Endothelial cell of umbilical vein (primary cell): ENCODE measurements at regions of chr12 and their contacts with region 1.

Region 1: GRCh38 chr12:52980693-52981423 is 25.4 kb upstream of the EIF4B start:
- DNase-seq: peak; percentile 91
- H3K4me3 ChIP-seq: no peak overlapping the region
- H3K27ac ChIP-seq: no peak overlapping the region
- H3K4me1 ChIP-seq: no peaks in the 10 kb centered on the region
- H3K27me3 ChIP-seq: peaks cover 3 to 4% of the 10 kb centered on the region in 2 experiments
- CTCF ChIP-seq: peak; percentile 92 to 100
- POLR2A ChIP-seq: no peak

Region 2: DNA sequence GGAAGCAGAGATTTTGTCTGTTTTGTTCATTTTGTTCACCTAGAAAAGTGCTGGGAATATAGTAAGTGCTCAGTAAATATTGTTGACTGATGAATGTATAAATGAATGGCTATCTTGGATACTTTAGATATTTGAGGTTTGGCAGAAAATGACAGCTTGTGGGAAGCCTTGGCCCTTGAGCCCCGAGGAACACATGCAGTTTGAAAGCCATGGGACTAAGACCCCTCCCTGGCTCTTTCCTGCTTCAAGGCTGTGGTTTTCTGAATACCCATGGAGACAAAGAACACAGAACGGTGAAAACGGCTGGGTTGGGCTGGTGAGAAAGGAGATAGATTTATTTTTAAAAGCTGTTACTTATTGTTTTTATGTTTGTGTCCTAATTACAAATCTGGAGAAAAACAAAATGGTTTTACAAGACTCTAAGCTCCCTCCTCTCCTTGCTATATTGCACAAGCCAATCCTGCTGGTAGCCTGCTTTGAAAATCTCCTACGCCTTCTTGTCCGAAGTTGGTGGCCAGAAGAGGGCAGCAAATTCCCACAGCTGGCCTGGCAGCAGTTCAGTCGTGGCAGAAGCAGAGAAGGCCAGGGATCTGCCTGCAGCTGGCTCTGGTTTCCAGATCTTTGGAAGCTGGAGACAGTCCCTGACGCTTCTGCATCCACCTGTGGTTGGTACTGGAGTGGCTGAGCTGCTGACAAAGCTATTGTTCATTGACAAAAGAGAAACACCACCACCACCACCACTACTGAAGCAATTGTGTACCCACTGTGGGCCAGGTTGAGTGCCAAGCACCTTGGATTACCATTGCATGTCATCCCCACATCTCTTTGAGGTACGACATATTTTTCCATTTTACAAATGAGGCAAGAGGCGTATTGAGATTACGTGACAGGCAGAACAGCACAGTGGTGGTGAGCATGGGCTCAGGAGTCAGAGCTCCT is 608.4 kb before region 1 on chr12:
- CTCF ChIA-PET with region 1: interaction called, 14 read pairs
- POLR2A ChIA-PET with region 1: no interaction called
- dilution Hi-C with region 1: no loop called
- intact Hi-C with region 1: loop called (anchors 1 kb)
- DNase-seq: peak; percentile 73
- H3K4me3 ChIP-seq: no peak overlapping the region
- H3K27ac ChIP-seq: no peak overlapping the region
- H3K4me1 ChIP-seq: no peaks in the 10 kb centered on the region
- H3K27me3 ChIP-seq: peaks cover 13 to 19% of the 10 kb centered on the region in 2 experiments
- CTCF ChIP-seq: peak; percentile 69 to 77
- POLR2A ChIP-seq: no peak

Region 3: GRCh38 chr12:52870351-52871290 is 110.2 kb before region 1 on chr12:
- CTCF ChIA-PET with region 1: interaction called, 13 read pairs
- POLR2A ChIA-PET with region 1: no interaction called
- dilution Hi-C with region 1: loop called (anchors 25 kb)
- intact Hi-C with region 1: no loop called
- DNase-seq: peak; percentile 32
- H3K4me3 ChIP-seq: no peak overlapping the region
- H3K27ac ChIP-seq: no peak overlapping the region
- H3K4me1 ChIP-seq: peaks cover 12% of the 10 kb centered on the region
- H3K27me3 ChIP-seq: no peaks in the 10 kb centered on the region
- CTCF ChIP-seq: peak; percentile 79 to 82
- POLR2A ChIP-seq: no peak

Region 4: DNA sequence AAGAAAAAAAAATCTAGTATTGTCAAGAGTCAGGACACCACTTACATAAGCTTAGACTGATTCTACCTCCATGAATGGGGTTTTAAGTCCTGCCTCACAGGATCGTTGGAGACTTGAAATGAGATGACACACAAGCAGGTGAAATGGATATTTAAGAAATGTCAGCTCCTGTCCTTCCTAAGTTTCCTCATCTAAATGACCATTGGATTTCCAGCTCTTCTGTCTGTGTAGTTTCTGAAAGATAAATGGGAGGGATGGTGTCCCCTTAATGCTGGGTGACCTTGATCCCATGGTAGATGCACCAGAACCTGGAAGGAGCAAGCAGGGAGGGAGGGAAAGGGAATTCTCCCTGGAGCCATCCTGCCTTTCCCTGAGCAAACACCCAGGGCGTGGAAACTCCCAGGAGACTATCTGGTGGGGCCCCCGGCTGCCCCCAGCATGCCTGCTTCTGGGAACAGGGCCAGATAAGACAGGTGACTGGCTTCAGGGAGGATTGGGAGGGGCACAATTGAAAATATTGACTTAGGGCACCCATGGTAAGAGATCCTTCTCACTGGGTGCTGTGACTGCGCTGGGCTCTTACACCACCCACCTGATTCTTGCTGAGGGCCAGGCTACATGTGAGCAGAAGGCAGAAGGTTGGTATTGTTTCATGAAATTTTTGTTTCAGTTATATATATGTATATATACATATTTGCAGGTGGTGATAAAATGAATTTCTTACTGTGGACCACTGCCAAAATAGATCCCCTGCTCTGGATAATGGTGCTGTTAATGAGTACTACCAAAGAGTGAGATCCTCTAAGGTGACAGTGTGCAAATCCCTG is 85.6 kb before region 1 on chr12:
- CTCF ChIA-PET with region 1: interaction called, 921 read pairs
- POLR2A ChIA-PET with region 1: no interaction called
- dilution Hi-C with region 1: loop called (anchors 25 kb)
- intact Hi-C with region 1: no loop called
- DNase-seq: no peak
- H3K4me3 ChIP-seq: no peak overlapping the region
- H3K27ac ChIP-seq: no peak overlapping the region
- H3K4me1 ChIP-seq: no peaks in the 10 kb centered on the region
- H3K27me3 ChIP-seq: no peaks in the 10 kb centered on the region
- CTCF ChIP-seq: no peak
- POLR2A ChIP-seq: no peak

Region 5: DNA sequence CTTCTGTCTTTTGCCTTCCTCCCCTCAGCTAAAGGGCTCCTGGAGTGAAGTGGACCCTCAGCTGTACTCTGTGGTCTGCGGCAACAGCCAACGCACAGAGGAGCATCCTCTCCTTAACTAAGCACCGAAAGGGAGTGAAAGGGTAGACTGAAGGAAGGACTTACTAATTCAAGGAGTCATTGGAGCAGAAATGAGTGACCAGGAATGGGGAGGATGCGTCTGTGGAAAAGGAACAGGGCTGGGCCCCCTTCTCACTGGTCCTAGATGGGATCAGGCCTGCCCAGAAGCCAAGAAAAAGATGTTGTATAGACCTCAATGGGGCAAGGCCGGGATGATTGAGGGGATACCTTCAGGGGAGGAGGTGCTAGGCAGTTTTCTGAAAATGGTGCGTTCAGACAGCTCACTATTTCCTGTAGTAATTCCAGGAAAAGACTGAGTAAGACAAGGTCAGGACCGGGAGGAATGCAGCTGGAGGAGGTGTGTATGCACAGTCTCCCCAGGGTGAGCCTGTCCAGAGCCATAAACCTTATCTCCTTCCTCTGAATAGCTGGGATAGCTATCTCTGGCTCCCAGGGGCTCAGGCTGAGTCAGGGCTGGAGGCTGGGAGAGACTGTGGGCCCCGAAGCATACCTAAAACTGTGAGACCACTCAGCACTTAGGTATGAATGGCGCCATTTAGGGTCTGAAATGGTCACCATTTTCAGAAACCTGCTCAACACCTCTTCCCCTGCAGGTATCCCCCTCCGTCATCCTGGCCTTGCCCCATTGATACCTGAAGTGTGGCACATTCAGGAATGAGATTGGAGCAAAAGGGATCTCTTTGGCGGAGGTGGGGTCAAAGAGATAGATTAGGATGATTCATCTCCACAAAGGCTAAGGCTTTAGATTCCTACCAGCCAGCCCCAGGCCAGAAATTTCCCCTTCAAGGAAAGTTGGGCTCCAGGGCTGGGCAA is 55.8 kb before region 1 on chr12:
- CTCF ChIA-PET with region 1: interaction called, 11 read pairs
- POLR2A ChIA-PET with region 1: no interaction called
- dilution Hi-C with region 1: no loop called
- intact Hi-C with region 1: loop called (anchors 1 kb)
- DNase-seq: peak; percentile 91
- H3K4me3 ChIP-seq: no peak overlapping the region
- H3K27ac ChIP-seq: peak overlapping the region; percentile 96
- H3K4me1 ChIP-seq: peaks cover 42% of the 10 kb centered on the region
- H3K27me3 ChIP-seq: no peaks in the 10 kb centered on the region
- CTCF ChIP-seq: no peak
- POLR2A ChIP-seq: peak; percentile 76

Region 6: GRCh38 chr12:52969828-52970569 is 10.9 kb before region 1 on chr12:
- CTCF ChIA-PET with region 1: interaction called, 26 read pairs
- POLR2A ChIA-PET with region 1: no interaction called
- dilution Hi-C with region 1: no loop called
- intact Hi-C with region 1: no loop called
- DNase-seq: no peak
- H3K4me3 ChIP-seq: no peak overlapping the region
- H3K27ac ChIP-seq: no peak overlapping the region
- H3K4me1 ChIP-seq: peaks cover under 1% of the 10 kb centered on the region
- H3K27me3 ChIP-seq: no peaks in the 10 kb centered on the region
- CTCF ChIP-seq: no peak
- POLR2A ChIP-seq: no peak